ENCODE measurements at regions of chr6 and their contacts with region 1.

Region 1: GRCh38 chr6:27146706-27147505 is 100.6 kb upstream of the PRSS16 start:
- DNase-seq: peak; percentile 37 to 94 (median 82)
- ATAC-seq: peak; percentile 85 to 88
- H3K4me3 Mint-ChIP-seq: no peak overlapping the region
- H3K27ac Mint-ChIP-seq: no peak overlapping the region
- H3K4me1 Mint-ChIP-seq: peaks cover 3 to 25% (median 12%) of the 10 kb centered on the region in 4 donors
- H3K27me3 Mint-ChIP-seq: no peaks in the 10 kb centered on the region

Region 2: GRCh38 chr6:26285143-26286134 is 861.5 kb before region 1 on chr6:
- POLR2A ChIA-PET with region 1: interaction called, 13 read pairs
- DNase-seq: peak; percentile 80 to 99 (median 93)
- ATAC-seq: peak; percentile 77 to 87
- H3K4me3 Mint-ChIP-seq: peak overlapping the region; percentile 84 to 96 (median 91)
- H3K27ac Mint-ChIP-seq: peak overlapping the region; percentile 95 to 100 (median 98)
- H3K4me1 Mint-ChIP-seq: peaks cover 19 to 36% (median 29%) of the 10 kb centered on the region in 4 donors
- H3K27me3 Mint-ChIP-seq: peaks cover 0 to 7% (median 0%) of the 10 kb centered on the region in 5 donors

Region 3: GRCh38 chr6:27157459-27158315 is 10.8 kb after region 1 on chr6:
- POLR2A ChIA-PET with region 1: interaction called, 51 read pairs
- DNase-seq: peak; percentile 64 to 92 (median 86)
- ATAC-seq: peak; percentile 87 to 91
- H3K4me3 Mint-ChIP-seq: peak overlapping the region; percentile 79 to 92 (median 90)
- H3K27ac Mint-ChIP-seq: peak overlapping the region; percentile 56 to 99 (median 84)
- H3K4me1 Mint-ChIP-seq: peaks cover 23 to 48% (median 42%) of the 10 kb centered on the region in 4 donors
- H3K27me3 Mint-ChIP-seq: no peaks in the 10 kb centered on the region

Region 4: GRCh38 chr6:27479319-27480182 is 332.6 kb after region 1 on chr6:
- POLR2A ChIA-PET with region 1: interaction called, 14 read pairs
- DNase-seq: peak; percentile 75 to 97 (median 92)
- ATAC-seq: peak; percentile 71 to 74
- H3K4me3 Mint-ChIP-seq: no peak overlapping the region
- H3K27ac Mint-ChIP-seq: no peak overlapping the region
- H3K4me1 Mint-ChIP-seq: peaks cover 0 to 15% (median 3%) of the 10 kb centered on the region in 4 donors
- H3K27me3 Mint-ChIP-seq: no peaks in the 10 kb centered on the region

Region 5: DNA sequence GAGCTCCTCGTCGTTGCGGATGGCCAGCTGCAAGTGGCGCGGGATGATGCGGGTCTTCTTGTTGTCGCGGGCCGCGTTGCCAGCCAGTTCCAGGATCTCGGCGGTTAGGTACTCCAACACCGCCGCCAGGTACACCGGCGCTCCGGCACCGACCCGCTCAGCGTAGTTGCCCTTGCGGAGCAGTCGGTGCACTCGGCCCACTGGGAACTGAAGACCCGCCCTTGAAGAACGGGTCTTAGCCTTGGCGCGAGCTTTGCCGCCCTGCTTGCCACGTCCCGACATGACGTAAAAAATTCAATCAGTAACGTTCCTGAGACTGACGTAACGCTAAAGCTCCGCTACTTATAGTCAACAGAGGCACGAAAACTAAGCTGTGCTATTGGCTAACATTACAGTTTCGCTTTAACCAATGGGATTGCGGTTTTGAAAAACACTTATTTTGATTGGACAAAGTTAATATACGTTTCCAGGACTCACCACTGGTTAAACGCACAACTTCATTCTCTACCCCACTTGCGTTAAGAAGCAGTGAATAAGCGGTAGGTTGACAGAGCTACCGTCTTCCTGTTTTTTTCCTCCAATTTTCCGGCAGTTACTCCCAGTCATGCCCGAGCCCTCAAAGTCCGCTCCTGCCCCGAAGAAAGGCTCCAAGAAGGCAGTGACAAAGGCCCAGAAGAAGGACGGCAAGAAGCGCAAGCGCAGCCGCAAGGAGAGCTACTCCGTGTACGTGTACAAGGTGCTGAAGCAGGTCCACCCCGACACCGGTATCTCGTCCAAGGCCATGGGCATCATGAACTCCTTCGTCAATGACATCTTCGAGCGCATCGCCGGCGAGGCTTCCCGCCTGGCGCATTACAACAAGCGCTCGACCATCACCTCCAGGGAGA is 691.4 kb after region 1 on chr6:
- POLR2A ChIA-PET with region 1: interaction called, 65 read pairs
- DNase-seq: peak; percentile 63 to 95 (median 88)
- ATAC-seq: peak; percentile 78 to 81
- H3K4me3 Mint-ChIP-seq: no peak overlapping the region
- H3K27ac Mint-ChIP-seq: no peak overlapping the region
- H3K4me1 Mint-ChIP-seq: peaks cover 8 to 36% (median 18%) of the 10 kb centered on the region in 4 donors
- H3K27me3 Mint-ChIP-seq: peaks cover 0 to 8% (median 0%) of the 10 kb centered on the region in 5 donors

Region 6: GRCh38 chr6:27871924-27872638 is 725.2 kb after region 1 on chr6:
- POLR2A ChIA-PET with region 1: interaction called, 51 read pairs
- DNase-seq: peak; percentile 57 to 99 (median 91)
- ATAC-seq: peak; percentile 78 to 79
- H3K4me3 Mint-ChIP-seq: peak overlapping the region; percentile 86 to 95 (median 92)
- H3K27ac Mint-ChIP-seq: peak overlapping the region; percentile 89 to 99 (median 96)
- H3K4me1 Mint-ChIP-seq: peaks cover 21 to 46% (median 38%) of the 10 kb centered on the region in 4 donors
- H3K27me3 Mint-ChIP-seq: no peaks in the 10 kb centered on the region